CD8-positive, alpha-beta T cell (primary cell): ENCODE measurements at regions of chr3 and their contacts with region 1.

Region 1: GRCh38 chr3:127574880-127575878 is 15.4 kb downstream of the TPRA1 start:
- DNase-seq: peak; percentile 70 to 91 (median 83)
- ATAC-seq: peak; percentile 98
- H3K4me3 ChIP-seq: no peak overlapping the region
- H3K4me3 Mint-ChIP-seq: peak overlapping the region; percentile 22
- H3K27ac ChIP-seq: peak overlapping the region in 1 of 2 experiments; percentile 43
- H3K27ac Mint-ChIP-seq: peak overlapping the region; percentile 84
- H3K4me1 ChIP-seq: peaks cover 9% of the 10 kb centered on the region
- H3K4me1 Mint-ChIP-seq: peaks cover 13% of the 10 kb centered on the region
- H3K27me3 ChIP-seq: no peaks in the 10 kb centered on the region
- H3K27me3 Mint-ChIP-seq: no peaks in the 10 kb centered on the region
- CTCF ChIP-seq: peak; percentile 90

Region 2: GRCh38 chr3:127585493-127586413 is 10.6 kb after region 1 on chr3:
- CTCF ChIA-PET with region 1: interaction called, 33 read pairs
- POLR2A ChIA-PET with region 1: interaction called, 4 read pairs
- intact Hi-C with region 1: loop called in 1 of 2 experiments (anchors 1 kb)
- DNase-seq: no peak
- ATAC-seq: no peak
- H3K4me3 ChIP-seq: no peak overlapping the region
- H3K4me3 Mint-ChIP-seq: no peak overlapping the region
- H3K27ac ChIP-seq: no peak overlapping the region
- H3K27ac Mint-ChIP-seq: no peak overlapping the region
- H3K4me1 ChIP-seq: peaks cover 14% of the 10 kb centered on the region
- H3K4me1 Mint-ChIP-seq: peaks cover 43% of the 10 kb centered on the region
- H3K27me3 ChIP-seq: no peaks in the 10 kb centered on the region
- H3K27me3 Mint-ChIP-seq: no peaks in the 10 kb centered on the region
- CTCF ChIP-seq: no peak

Region 3: DNA sequence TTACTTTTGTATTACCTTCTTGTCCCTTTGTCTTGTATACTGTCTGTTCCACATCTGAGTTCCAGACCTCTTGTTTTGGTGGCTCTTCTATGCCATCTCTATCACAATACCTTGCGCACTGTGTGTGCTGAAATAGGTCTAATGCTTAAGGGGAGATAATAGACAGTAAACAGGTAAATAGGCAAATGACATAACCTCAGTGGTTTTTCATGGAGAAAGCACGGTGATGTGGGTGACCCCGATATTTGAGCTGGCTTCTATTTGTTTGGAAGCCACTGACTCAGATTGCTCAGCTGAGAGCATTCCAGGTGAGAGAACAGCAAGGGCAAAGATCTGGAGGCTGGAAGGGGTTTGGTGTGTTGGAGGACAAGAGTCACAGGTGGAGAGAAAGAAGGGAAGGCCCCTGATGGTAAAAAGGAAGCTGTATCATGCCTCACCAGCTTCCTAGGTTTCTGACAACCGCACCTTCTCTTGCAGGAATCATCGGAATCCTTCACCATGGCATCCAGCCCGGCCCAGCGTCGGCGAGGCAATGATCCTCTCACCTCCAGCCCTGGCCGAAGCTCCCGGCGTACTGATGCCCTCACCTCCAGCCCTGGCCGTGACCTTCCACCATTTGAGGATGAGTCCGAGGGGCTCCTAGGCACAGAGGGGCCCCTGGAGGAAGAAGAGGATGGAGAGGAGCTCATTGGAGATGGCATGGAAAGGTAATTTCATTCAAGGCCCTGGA is 23.8 kb after region 1 on chr3:
- CTCF ChIA-PET with region 1: interaction called, 23 read pairs
- POLR2A ChIA-PET with region 1: interaction called, 4 read pairs
- intact Hi-C with region 1: no loop called
- DNase-seq: no peak
- ATAC-seq: no peak
- H3K4me3 ChIP-seq: peak overlapping the region; percentile 53 to 60
- H3K4me3 Mint-ChIP-seq: peak overlapping the region; percentile 78
- H3K27ac ChIP-seq: peak overlapping the region; percentile 53 to 69
- H3K27ac Mint-ChIP-seq: peak overlapping the region; percentile 76
- H3K4me1 ChIP-seq: peaks cover 11% of the 10 kb centered on the region
- H3K4me1 Mint-ChIP-seq: peaks cover 15% of the 10 kb centered on the region
- H3K27me3 ChIP-seq: no peaks in the 10 kb centered on the region
- H3K27me3 Mint-ChIP-seq: no peaks in the 10 kb centered on the region
- CTCF ChIP-seq: no peak

Region 4: GRCh38 chr3:127662001-127662469 is 86.9 kb after region 1 on chr3:
- CTCF ChIA-PET with region 1: no interaction called
- POLR2A ChIA-PET with region 1: no interaction called
- intact Hi-C with region 1: no loop called
- DNase-seq: no peak
- ATAC-seq: no peak
- H3K4me3 ChIP-seq: no peak overlapping the region
- H3K4me3 Mint-ChIP-seq: no peak overlapping the region
- H3K27ac ChIP-seq: no peak overlapping the region
- H3K27ac Mint-ChIP-seq: no peak overlapping the region
- H3K4me1 ChIP-seq: no peaks in the 10 kb centered on the region
- H3K4me1 Mint-ChIP-seq: no peaks in the 10 kb centered on the region
- H3K27me3 ChIP-seq: no peaks in the 10 kb centered on the region
- H3K27me3 Mint-ChIP-seq: no peaks in the 10 kb centered on the region
- CTCF ChIP-seq: no peak

Region 5: DNA sequence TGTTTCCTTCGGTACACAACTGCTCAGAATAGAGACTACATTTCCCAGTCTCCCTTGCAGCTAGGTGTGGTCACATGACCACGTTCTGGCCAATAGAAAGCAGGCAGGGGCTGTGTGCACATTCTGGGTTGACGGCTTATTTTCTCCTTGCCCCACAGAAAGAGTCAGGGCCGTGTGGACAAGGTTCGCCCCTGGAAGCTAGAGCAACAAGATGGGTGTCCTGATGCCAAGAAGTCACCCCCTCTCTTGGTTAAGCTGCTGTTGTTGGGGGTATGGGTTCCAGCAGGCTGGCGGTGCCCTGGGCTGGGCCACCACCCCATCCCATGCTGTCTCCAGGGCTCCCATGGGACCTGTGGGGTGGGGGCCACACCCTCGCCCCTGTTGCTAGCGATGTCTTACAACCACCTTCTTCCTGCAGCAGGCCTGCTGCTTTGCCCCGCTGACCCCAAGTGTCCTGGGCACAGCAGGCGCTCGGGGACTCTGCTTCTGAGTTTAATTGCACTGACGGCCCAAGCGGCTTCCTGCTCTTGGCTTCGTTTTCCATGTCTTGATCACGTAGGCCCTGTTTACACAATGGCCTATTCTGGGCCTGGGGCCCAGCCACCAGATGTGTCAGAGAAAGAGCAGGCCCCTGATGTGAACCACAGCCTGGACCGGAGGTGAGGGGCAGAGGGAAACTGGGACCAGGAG is 122.5 kb after region 1 on chr3:
- CTCF ChIA-PET with region 1: interaction called, 12 read pairs
- POLR2A ChIA-PET with region 1: no interaction called
- intact Hi-C with region 1: loop called in 1 of 2 experiments (anchors 1 kb)
- DNase-seq: peak in 6 of 9 experiments; percentile 13 to 70 (median 46)
- ATAC-seq: peak; percentile 77
- H3K4me3 ChIP-seq: no peak overlapping the region
- H3K4me3 Mint-ChIP-seq: no peak overlapping the region
- H3K27ac ChIP-seq: no peak overlapping the region
- H3K27ac Mint-ChIP-seq: no peak overlapping the region
- H3K4me1 ChIP-seq: no peaks in the 10 kb centered on the region
- H3K4me1 Mint-ChIP-seq: peaks cover 7% of the 10 kb centered on the region
- H3K27me3 ChIP-seq: no peaks in the 10 kb centered on the region
- H3K27me3 Mint-ChIP-seq: no peaks in the 10 kb centered on the region
- CTCF ChIP-seq: no peak

Region 6: GRCh38 chr3:127970966-127971592 is 395.9 kb after region 1 on chr3:
- CTCF ChIA-PET with region 1: interaction called, 15 read pairs
- POLR2A ChIA-PET with region 1: no interaction called
- intact Hi-C with region 1: loop called in 1 of 2 experiments (anchors 1 kb)
- DNase-seq: peak in 2 of 9 experiments; percentile 38 to 54
- ATAC-seq: no peak
- H3K4me3 ChIP-seq: no peak overlapping the region
- H3K4me3 Mint-ChIP-seq: no peak overlapping the region
- H3K27ac ChIP-seq: no peak overlapping the region
- H3K27ac Mint-ChIP-seq: no peak overlapping the region
- H3K4me1 ChIP-seq: no peaks in the 10 kb centered on the region
- H3K4me1 Mint-ChIP-seq: no peaks in the 10 kb centered on the region
- H3K27me3 ChIP-seq: no peaks in the 10 kb centered on the region
- H3K27me3 Mint-ChIP-seq: peaks cover 4% of the 10 kb centered on the region
- CTCF ChIP-seq: peak; percentile 40

Region 7: GRCh38 chr3:128607710-128608048 is 1032.5 kb after region 1 on chr3:
- CTCF ChIA-PET with region 1: no interaction called
- POLR2A ChIA-PET with region 1: no interaction called
- intact Hi-C with region 1: loop called in 1 of 2 experiments (anchors 10 kb)
- DNase-seq: no peak
- ATAC-seq: no peak
- H3K4me3 ChIP-seq: peak overlapping the region; percentile 57 to 76
- H3K4me3 Mint-ChIP-seq: no peak overlapping the region
- H3K27ac ChIP-seq: no peak overlapping the region
- H3K27ac Mint-ChIP-seq: no peak overlapping the region
- H3K4me1 ChIP-seq: peaks cover 5% of the 10 kb centered on the region
- H3K4me1 Mint-ChIP-seq: peaks cover 4% of the 10 kb centered on the region
- H3K27me3 ChIP-seq: peaks cover 0 to 2% of the 10 kb centered on the region in 2 experiments
- H3K27me3 Mint-ChIP-seq: peaks cover 3% of the 10 kb centered on the region
- CTCF ChIP-seq: no peak